Cardiac septum (tissue), 1 donor: ENCODE measurements at regions of chr2 and their contacts with region 1.

Region 1: DNA sequence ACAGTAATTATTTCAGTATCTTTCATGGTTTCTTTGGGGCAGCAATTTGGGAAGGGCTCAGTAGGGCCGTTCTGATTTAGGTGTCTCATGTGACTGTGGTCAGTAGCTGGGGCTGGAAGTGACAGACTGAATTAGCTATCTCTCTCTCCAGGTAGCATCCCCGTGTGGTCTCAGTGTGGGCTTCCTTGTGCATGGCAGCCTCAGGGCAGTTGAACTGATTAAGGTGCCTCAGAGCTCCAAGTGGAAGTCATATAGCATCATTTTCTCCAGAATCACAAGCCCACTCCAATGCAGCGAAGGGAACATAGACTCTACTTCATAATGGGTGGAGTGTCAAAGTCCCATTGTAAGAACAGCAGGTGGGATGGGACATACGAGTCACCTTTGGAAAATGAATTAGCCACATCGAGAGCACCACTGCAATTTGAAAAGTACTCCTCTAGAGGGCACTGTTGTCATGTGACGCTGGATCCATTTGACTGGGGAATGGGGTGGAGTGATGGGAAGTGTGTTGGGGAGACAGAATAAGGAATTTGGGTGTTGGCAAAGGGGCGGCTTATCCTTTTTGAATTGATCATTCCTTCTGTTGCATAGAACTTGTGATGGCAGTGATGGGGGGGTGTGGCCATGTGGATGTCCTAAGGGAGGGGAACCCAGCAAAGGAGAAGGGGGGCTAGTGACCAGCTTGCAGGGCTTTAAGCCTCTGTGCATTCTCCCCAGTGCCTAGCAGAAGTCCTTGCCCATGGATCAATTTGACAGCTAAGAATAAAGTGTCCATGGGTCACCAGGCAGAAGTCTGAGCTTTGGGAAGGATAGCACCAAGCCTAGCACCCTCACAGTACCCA is 39.3 kb upstream of the FAM136A start:
- DNase-seq: no peak

Region 2: GRCh38 chr2:70161069-70161534 is 180.0 kb before region 1 on chr2:
- intact Hi-C with region 1: no loop called
- DNase-seq: no peak

Region 3: GRCh38 chr2:70647873-70648481 is 306.8 kb after region 1 on chr2:
- intact Hi-C with region 1: loop called (anchors 2 kb)
- DNase-seq: no peak